ENCODE measurements at regions of chr19 and their contacts with region 1.

Region 1: DNA sequence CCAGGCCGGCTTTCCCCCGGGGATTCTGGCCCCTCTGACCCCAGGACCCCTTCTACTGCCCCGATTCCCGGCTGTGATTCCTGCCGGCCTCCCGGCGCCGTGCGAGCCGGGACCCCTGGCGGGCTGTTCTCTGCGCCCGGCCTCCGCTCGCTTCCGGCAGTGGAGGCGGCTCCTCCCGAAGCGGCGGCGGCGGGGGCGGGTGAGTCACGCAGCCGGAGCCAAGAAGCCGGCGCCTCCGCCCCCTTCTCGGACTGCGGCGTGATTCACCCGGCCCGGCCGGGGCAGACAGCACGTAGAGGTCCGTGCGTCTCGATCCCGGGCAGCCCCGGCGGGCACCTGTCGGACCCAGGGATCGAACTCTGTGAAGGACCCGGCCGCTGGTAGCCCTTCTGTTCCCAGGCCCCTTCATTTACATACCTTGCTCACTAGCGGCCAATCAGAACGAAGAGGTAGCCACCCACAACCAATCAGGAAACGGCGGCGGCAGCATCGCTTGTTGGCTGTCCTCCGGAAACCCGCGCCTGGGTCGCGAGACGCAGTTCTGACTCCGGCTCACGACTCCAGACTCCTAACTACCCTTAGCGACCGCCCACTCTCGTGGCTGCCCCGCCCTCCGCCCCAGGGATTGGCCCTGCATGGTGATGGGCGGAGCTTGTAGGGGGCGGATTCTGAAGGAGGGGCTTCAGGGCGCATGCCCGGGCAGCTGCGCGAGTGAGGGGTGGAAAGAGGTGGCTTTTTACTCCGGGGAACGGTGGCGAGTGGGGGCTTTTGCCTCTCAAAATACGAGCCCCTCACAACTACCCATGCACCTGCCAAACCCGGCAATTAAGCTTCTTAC is at the start of gene SERTAD1:
- DNase-seq: peak; percentile 100
- ATAC-seq: peak; percentile 89 to 95 (median 94)
- H3K4me3 ChIP-seq: peak within 1 kb of the TSS; percentile 66 to 91 (median 82)
- H3K27ac ChIP-seq: peak within 1 kb of the TSS; percentile 93 to 100 (median 98)
- H3K4me1 ChIP-seq: peaks cover 5 to 48% (median 40%) of the 10 kb centered on the region in 9 donors
- H3K27me3 ChIP-seq: no peaks in the 10 kb centered on the region
- CTCF ChIP-seq: peak in 8 of 9 donors; percentile 58 to 88 (median 83)
- total RNA-seq, gene SERTAD1: 6.3 to 16.8 (median 8.4) TPM

Region 2: DNA sequence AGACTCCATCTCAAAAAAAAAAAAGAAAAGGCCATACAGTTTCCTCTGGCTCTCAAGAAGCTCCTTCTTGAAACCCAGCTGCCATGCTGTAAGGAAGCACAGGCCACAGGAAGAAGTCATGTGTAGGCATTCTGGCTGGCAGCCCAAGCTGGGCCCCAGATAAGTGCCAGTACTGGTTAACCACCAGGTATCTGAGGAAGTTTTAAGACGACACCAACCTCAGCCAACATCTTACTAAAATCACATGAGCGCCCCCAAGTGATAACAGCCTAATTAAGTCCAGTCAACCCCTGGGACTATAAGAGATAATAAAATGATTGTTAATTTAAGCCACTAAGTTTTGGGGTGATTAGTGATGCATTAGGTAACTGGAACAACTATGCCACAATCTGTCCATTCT is 113.1 kb before region 1 on chr19:
- intact Hi-C with region 1: no loop called
- DNase-seq: no peak
- ATAC-seq: no peak
- H3K4me3 ChIP-seq: no peak overlapping the region
- H3K27ac ChIP-seq: no peak overlapping the region
- H3K4me1 ChIP-seq: peaks cover 0 to 11% (median 0%) of the 10 kb centered on the region in 9 donors
- H3K27me3 ChIP-seq: no peaks in the 10 kb centered on the region
- CTCF ChIP-seq: no peak

Region 3: GRCh38 chr19:40348125-40348913 is 77.3 kb before region 1 on chr19 and contains the starts of genes C19orf47 and PLD3:
- intact Hi-C with region 1: loop called in 4 of 10 experiments (anchors 2 to 10 kb)
- DNase-seq: peak; percentile 99
- ATAC-seq: peak; percentile 97 to 99 (median 98)
- H3K4me3 ChIP-seq: peak within 1 kb of the TSS; percentile 59 to 91 (median 76)
- H3K27ac ChIP-seq: peak within 1 kb of the TSS in 9 of 10 donors; percentile 72 to 88 (median 80)
- H3K4me1 ChIP-seq: peaks cover 4 to 45% (median 25%) of the 10 kb centered on the region in 9 donors
- H3K27me3 ChIP-seq: no peaks in the 10 kb centered on the region
- CTCF ChIP-seq: no peak
- total RNA-seq, gene C19orf47: 138 to 227 (median 145) TPM
- total RNA-seq, gene PLD3: 136 to 238 (median 181) TPM

Region 4: DNA sequence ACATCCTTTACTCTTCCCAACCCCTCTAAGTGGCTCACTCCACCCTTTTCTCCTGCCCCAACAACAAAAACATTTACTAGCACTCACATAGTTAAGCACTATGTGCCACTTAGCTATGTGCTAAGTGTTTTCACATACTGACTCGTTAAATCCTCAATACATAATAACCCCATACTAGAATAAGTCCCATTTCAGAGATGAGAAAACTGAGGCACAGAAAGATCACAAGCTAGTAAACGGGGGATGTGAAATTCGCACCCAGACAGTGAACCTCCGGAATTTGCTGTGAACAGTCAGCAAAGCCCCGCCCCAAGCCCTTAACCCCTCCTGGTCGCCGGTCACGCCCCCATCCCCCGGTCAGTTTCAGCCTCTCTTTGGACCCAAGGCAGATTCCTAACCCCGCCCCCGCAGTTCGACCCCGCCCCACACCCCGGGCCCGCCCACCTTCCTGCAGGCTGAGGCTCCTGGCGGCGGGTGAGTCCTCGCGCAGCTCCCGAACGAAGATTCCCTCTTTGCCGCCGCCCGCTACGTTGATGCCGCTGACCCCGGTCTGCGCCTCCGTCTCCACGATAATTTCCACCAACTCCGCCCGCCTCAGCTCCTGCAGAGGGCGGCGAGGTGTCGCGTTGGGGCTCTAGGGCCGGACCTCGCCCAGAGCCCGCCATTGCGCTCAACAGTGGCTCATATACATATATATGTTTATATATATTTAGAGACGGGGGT is 22.2 kb before region 1 on chr19:
- intact Hi-C with region 1: loop called in 1 of 10 experiments (anchors 1 kb)
- DNase-seq: peak; percentile 93 to 94
- ATAC-seq: peak; percentile 89 to 96 (median 94)
- H3K4me3 ChIP-seq: peak overlapping the region; percentile 51 to 73 (median 63)
- H3K27ac ChIP-seq: peak overlapping the region; percentile 51 to 89 (median 86)
- H3K4me1 ChIP-seq: peaks cover 0 to 21% (median 12%) of the 10 kb centered on the region in 9 donors
- H3K27me3 ChIP-seq: no peaks in the 10 kb centered on the region
- CTCF ChIP-seq: peak in 2 of 9 donors; percentile 28 to 34

Region 5: DNA sequence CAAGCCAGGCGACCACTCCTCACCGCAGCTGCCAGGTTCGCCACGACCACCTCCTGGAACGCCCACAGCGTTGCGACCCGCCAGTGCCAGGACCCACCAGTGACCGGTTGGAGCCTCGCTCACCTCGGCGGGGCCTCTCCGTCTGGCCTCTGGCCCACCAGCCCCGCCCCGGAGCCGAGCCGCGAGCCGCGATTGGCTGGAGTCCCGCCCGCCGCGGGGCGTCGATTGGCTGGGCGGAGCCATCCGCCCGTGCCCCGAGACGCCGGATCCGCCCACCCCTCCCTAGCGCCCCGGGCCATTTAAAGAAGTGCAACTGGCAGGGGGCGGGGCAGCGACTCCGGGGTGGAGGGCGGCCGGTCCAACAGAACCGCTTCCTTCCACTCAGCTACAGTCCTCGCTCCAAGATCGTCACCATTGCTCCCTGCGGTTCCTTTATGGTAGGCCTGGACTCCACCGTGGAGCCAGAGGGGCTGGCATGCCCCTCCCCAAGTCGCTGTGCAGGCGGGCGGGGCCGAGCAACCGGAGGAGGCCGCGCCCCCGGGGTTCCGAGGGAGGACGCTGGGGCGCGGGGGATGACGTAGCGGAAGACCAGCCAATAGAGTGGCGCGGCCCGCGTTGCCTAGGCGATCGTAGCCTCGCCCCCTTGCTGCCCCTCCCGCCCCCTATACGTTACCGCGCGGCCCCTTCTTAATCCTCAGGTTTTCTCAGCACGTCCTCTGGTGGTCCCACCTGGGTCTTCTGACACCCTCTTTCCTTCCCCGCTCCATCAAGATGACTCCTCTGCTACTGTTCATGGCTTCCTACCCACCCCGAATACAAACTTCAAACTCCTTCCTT is 18.7 kb after region 1 on chr19 and contains the start of gene SERTAD3:
- intact Hi-C with region 1: loop called in 4 of 10 experiments (anchors 1 kb)
- DNase-seq: peak; percentile 97
- ATAC-seq: peak; percentile 82 to 90 (median 88)
- H3K4me3 ChIP-seq: peak within 1 kb of the TSS; percentile 70 to 96 (median 85)
- H3K27ac ChIP-seq: peak within 1 kb of the TSS; percentile 80 to 100 (median 97)
- H3K4me1 ChIP-seq: peaks cover 10 to 38% (median 27%) of the 10 kb centered on the region in 9 donors
- H3K27me3 ChIP-seq: no peaks in the 10 kb centered on the region
- CTCF ChIP-seq: peak in 6 of 9 donors; percentile 15 to 51 (median 39)
- total RNA-seq, gene SERTAD3: 19.4 to 37.5 (median 27.4) TPM

Region 6: GRCh38 chr19:40603389-40604135 is 177.9 kb after region 1 on chr19:
- intact Hi-C with region 1: loop called in 1 of 10 experiments (anchors 5 kb)
- DNase-seq: peak; percentile 98
- ATAC-seq: peak; percentile 72 to 85 (median 81)
- H3K4me3 ChIP-seq: peak overlapping the region in 9 of 10 donors; percentile 40 to 81 (median 72)
- H3K27ac ChIP-seq: peak overlapping the region; percentile 49 to 96 (median 90)
- H3K4me1 ChIP-seq: peaks cover 26 to 88% (median 74%) of the 10 kb centered on the region in 9 donors
- H3K27me3 ChIP-seq: peaks cover 0 to 68% (median 0%) of the 10 kb centered on the region in 7 donors
- CTCF ChIP-seq: no peak

Measured in heart right ventricle (tissue), 16 donors.